Left cardiac atrium (tissue), 4 donors: ENCODE measurements at regions of chr2 and their contacts with region 1.

Region 1: GRCh38 chr2:102020596-102021181 is 28.9 kb downstream of the IL1R2 start:
- DNase-seq: peak; percentile 90
- ATAC-seq: peak; percentile 93 to 94

Region 2: DNA sequence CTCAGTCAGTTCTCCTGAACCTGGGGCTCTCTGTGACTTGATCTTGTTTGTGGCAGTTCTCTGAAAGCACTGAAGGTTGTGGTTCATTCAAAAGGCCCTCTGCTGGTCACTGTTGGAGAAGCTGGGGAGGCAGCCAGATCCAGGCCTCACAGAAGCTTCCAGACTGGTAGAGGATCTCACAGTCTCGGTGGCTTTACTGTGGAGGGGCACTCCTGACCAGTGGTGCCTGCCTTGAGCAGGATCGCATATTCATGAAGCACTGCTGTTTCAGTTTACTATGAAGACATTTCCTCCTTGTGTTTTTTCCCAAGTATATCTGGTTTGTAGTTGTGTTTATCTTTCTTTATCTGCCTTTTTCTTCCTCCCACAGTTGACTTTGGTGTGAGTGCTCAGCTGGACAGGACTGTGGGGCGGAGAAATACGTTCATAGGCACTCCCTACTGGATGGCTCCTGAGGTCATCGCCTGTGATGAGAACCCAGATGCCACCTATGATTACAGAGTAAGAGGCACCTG is 189.3 kb before region 1 on chr2:
- intact Hi-C with region 1: no loop called
- DNase-seq: peak; percentile 77
- ATAC-seq: peak; percentile 76 to 87

Region 3: DNA sequence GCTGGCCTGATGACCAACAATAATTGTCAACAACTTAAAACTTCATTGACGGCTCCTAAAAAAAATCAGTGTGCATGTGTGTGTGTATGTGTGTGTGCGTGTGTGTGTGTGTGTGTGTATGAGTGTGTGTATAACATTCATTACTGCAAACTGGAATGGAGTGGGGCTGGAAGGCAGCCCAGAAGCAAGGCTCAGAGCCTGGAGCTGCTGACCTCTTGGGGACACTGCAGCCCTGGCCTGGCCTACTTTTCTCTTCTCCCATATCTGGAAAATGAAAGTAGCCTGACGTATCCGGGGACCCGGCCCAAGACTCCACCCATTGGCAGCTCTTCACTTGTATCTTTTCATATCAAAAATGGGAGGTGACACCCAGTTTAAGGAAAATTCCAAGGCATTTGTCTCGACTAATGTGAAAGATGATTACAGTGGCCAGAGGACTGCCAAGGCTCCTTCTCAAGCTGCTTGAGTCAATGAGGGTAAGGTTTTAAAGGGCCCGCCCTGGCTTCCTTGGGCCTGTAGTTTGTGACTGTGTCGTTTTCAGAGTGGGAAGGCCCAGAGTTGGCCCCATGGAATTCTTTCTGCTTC is 49.5 kb after region 1 on chr2:
- intact Hi-C with region 1: no loop called
- DNase-seq: peak; percentile 92
- ATAC-seq: peak; percentile 95 to 98

Region 4: GRCh38 chr2:102166189-102166845 is 145.6 kb after region 1 on chr2:
- intact Hi-C with region 1: loop called (anchors 1 to 5 kb)
- DNase-seq: no peak
- ATAC-seq: peak; percentile 84 to 94